ENCODE measurements at regions of chrX and their contacts with region 1.

Region 1: DNA sequence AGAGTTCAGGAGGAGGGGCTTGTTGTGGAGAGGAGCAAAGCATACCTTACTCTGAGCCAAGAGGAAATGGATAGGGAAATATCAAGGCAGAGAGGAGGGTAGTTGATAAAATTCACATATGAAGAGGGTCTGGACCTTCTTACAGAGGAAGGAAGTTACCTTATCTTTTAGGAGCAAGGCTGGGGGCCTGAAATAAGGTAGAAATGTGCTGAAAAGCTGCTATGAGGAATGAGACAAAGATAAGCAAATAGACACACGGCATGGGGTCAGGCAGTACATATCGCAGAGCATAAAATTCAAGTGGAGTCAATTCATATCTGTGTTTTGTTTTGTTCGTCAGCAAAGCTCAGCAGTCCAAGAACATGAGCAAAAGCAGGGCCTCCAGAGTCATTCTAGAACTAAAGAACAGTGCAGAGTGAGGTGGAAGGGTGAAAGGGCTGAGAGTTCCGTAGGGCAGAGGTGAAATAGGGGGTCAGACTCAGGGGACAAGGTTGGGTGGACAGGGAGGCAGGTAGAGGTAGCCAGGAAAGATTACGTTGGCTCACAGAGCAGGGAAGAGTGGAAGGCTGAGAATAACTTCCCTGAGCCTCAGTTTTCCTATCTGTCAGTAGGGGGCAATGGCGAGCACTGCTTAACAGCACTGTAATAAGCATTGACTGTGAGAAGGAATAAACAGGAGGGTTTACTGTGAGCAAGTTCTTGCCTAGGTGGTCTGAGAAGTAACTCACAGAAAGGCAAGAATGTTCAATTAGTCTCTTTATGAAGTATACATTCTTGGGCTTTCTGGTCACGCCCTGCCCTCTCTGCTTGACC is 9.2 kb downstream of the VSIG4 start:
- DNase-seq: peak in 3 of 9 donors; percentile 27 to 33 (median 31)
- ATAC-seq: peak; percentile 69
- H3K4me3 ChIP-seq: no peak overlapping the region
- H3K4me3 Mint-ChIP-seq: no peak overlapping the region
- H3K27ac ChIP-seq: no peak overlapping the region
- H3K27ac Mint-ChIP-seq: no peak overlapping the region
- H3K4me1 ChIP-seq: peaks cover 0 to 6% of the 10 kb centered on the region in 2 donors
- H3K4me1 Mint-ChIP-seq: peaks cover 0 to 18% (median 9%) of the 10 kb centered on the region in 7 donors
- H3K27me3 ChIP-seq: no peaks in the 10 kb centered on the region
- H3K27me3 Mint-ChIP-seq: no peaks in the 10 kb centered on the region

Region 2: GRCh38 chrX:65997978-65998717 is 32.6 kb before region 1 on chrX:
- CTCF ChIA-PET with region 1: no interaction called
- POLR2A ChIA-PET with region 1: no interaction called
- intact Hi-C with region 1: no loop called
- DNase-seq: no peak
- ATAC-seq: peak; percentile 90
- H3K4me3 ChIP-seq: no peak overlapping the region
- H3K4me3 Mint-ChIP-seq: no peak overlapping the region
- H3K27ac ChIP-seq: no peak overlapping the region
- H3K27ac Mint-ChIP-seq: peak overlapping the region in 1 of 9 donors; percentile 54
- H3K4me1 ChIP-seq: peaks cover 0 to 38% of the 10 kb centered on the region in 2 donors
- H3K4me1 Mint-ChIP-seq: peaks cover 30 to 58% (median 49%) of the 10 kb centered on the region in 7 donors
- H3K27me3 ChIP-seq: no peaks in the 10 kb centered on the region
- H3K27me3 Mint-ChIP-seq: no peaks in the 10 kb centered on the region

Region 3: DNA sequence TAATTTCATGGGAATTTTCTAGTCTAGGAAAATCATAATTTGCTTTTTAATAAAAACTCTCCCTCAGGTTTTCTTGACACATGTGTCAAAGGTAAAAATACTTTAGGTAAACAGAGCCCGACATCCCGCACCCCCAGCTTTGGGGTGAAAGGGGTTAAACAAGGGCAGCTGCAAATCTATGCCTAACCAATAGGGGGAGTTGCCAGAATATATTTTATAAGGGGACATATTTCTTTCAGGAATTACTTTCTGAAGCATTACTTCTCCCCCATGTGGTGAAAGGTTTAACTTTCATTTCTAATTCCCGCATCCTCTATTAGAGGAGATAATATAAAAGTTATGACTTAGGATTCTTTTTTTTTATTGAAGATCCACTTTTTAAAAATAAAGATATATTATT is 79.4 kb after region 1 on chrX:
- CTCF ChIA-PET with region 1: interaction called, 5 read pairs
- POLR2A ChIA-PET with region 1: no interaction called
- intact Hi-C with region 1: loop called in 1 of 2 experiments (anchors 1 kb)
- DNase-seq: peak in 6 of 9 donors; percentile 7 to 37 (median 21)
- ATAC-seq: peak; percentile 66
- H3K4me3 ChIP-seq: no peak overlapping the region
- H3K4me3 Mint-ChIP-seq: no peak overlapping the region
- H3K27ac ChIP-seq: no peak overlapping the region
- H3K27ac Mint-ChIP-seq: no peak overlapping the region
- H3K4me1 ChIP-seq: no peaks in the 10 kb centered on the region
- H3K4me1 Mint-ChIP-seq: peaks cover 0 to 18% (median 7%) of the 10 kb centered on the region in 7 donors
- H3K27me3 ChIP-seq: no peaks in the 10 kb centered on the region
- H3K27me3 Mint-ChIP-seq: no peaks in the 10 kb centered on the region

Region 4: GRCh38 chrX:66408507-66408906 is 377.8 kb after region 1 on chrX:
- CTCF ChIA-PET with region 1: no interaction called
- POLR2A ChIA-PET with region 1: no interaction called
- intact Hi-C with region 1: loop called in 1 of 2 experiments (anchors 1 kb)
- DNase-seq: peak in 4 of 9 donors; percentile 1 to 37 (median 6)
- ATAC-seq: no peak
- H3K4me3 ChIP-seq: no peak overlapping the region
- H3K4me3 Mint-ChIP-seq: no peak overlapping the region
- H3K27ac ChIP-seq: no peak overlapping the region
- H3K27ac Mint-ChIP-seq: no peak overlapping the region
- H3K4me1 ChIP-seq: no peaks in the 10 kb centered on the region
- H3K4me1 Mint-ChIP-seq: peaks cover 0 to 4% (median 0%) of the 10 kb centered on the region in 7 donors
- H3K27me3 ChIP-seq: no peaks in the 10 kb centered on the region
- H3K27me3 Mint-ChIP-seq: peaks cover 0 to 5% (median 3%) of the 10 kb centered on the region in 5 donors

Measured in naive thymus-derived CD4-positive, alpha-beta T cell (primary cell).